ENCODE measurements at regions of chr22 and their contacts with region 1.

Region 1: GRCh38 chr22:17237038-17237668 is 17.9 kb upstream of the ADA2 start:
- DNase-seq: no peak
- ATAC-seq: no peak
- H3K4me3 Mint-ChIP-seq: no peak overlapping the region
- H3K27ac Mint-ChIP-seq: peak overlapping the region; percentile 91
- H3K4me1 Mint-ChIP-seq: peaks cover 62% of the 10 kb centered on the region
- H3K27me3 Mint-ChIP-seq: no peaks in the 10 kb centered on the region
- CTCF ChIP-seq: no peak

Region 2: DNA sequence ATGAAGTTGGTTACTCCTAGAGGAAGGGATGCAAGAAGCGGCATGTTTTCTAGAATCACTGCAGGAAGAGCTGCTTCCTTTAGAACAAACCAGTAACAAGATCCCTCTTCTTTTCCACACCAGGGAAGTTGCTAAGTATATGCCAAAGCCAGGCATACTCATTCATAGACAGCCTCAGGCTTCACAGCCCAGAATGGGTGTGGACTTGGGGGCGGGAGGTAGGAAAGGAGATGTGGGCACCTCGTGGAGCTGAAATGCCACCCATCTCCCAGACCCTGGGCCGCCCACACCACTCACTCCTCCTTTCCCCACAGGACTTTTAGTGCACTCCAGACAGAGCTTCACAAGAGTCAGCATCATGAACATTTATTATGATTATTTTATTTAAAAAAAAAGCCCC is 100.0 kb before region 1 on chr22:
- CTCF ChIA-PET with region 1: no interaction called
- POLR2A ChIA-PET with region 1: no interaction called
- DNase-seq: no peak
- ATAC-seq: no peak
- H3K4me3 Mint-ChIP-seq: no peak overlapping the region
- H3K27ac Mint-ChIP-seq: no peak overlapping the region
- H3K4me1 Mint-ChIP-seq: 0 out of 2 replicates have a peak, but pooled peaks cover 2% of the 10 kb centered on the region
- H3K27me3 Mint-ChIP-seq: no peaks in the 10 kb centered on the region
- CTCF ChIP-seq: no peak

Region 3: GRCh38 chr22:17205432-17205831 is 31.7 kb before region 1 on chr22:
- CTCF ChIA-PET with region 1: interaction called, 13 read pairs
- POLR2A ChIA-PET with region 1: no interaction called
- DNase-seq: no peak
- ATAC-seq: no peak
- H3K4me3 Mint-ChIP-seq: no peak overlapping the region
- H3K27ac Mint-ChIP-seq: 0 out of 2 replicates have a peak overlapping the region, but pooled peaks have one; percentile 70
- H3K4me1 Mint-ChIP-seq: peaks cover 35% of the 10 kb centered on the region
- H3K27me3 Mint-ChIP-seq: peaks cover 7% of the 10 kb centered on the region; the same call in 1 of the 2 replicates
- CTCF ChIP-seq: no peak

Region 4: DNA sequence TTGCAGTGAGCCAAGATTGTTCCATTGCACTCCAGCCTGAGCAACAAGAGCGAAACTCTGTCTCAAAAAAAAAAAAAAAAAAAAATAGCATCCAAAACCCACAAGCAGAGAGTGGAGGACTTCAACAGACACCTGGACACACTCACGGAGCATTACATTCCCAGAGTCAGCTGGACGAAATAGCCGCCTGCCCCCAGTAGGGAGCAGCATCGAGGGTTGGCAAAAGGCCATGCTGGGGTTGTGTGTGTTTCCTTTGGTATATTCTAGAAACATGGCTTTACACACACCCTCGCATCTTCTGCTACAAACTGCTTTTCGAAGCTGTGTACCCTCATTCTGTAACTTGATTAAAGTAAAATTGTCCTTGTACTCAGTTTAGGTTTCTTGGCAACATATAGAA is 23.2 kb before region 1 on chr22:
- CTCF ChIA-PET with region 1: interaction called, 37 read pairs
- POLR2A ChIA-PET with region 1: interaction called, 3 read pairs
- DNase-seq: peak; percentile 72
- ATAC-seq: peak; percentile 70
- H3K4me3 Mint-ChIP-seq: no peak overlapping the region
- H3K27ac Mint-ChIP-seq: no peak overlapping the region
- H3K4me1 Mint-ChIP-seq: peaks cover 41% of the 10 kb centered on the region
- H3K27me3 Mint-ChIP-seq: no peaks in the 10 kb centered on the region; the same call in 1 of the 2 replicates
- CTCF ChIP-seq: peak; percentile 31; the same call in 1 of the 2 replicates

Region 5: DNA sequence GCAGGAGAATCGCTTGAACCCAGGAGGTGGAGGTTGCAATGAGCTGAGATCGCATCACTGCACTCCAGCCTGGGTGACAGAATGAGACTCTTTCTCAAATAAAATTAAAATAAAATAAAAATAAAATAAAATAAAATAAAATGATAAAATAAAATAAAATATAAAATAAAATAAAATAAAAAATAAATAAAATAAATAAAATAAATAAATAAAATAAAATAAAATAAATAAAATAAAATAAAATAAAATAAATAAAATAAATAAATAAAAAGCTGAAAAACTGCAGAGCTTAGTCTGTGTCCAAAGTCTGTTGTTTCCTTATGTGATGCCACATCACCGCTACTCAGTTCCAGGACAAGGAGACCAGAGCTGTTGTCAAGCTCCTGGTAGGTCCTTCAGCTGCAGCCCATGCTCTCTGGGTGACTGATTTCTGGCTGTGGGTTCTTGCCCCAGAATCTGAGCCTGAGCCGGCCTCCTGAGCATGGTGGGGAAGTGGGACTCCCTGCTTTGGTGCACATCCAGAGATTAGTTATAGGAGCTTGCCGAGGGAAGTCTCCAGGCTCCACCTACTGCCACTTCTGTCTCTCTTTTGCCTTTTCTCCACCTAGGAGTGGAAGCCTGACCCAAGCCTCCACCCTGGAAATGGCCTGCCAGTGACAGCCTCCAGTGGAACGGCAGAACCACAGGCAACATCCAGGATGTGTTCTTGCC is 13.4 kb after region 1 on chr22:
- CTCF ChIA-PET with region 1: interaction called, 10 read pairs
- POLR2A ChIA-PET with region 1: interaction called, 3 read pairs
- DNase-seq: no peak
- ATAC-seq: peak; percentile 38; the same call in 1 of the 2 replicates
- H3K4me3 Mint-ChIP-seq: no peak overlapping the region
- H3K27ac Mint-ChIP-seq: peak overlapping the region; percentile 91
- H3K4me1 Mint-ChIP-seq: peaks cover 6% of the 10 kb centered on the region
- H3K27me3 Mint-ChIP-seq: no peaks in the 10 kb centered on the region
- CTCF ChIP-seq: no peak

Region 6: GRCh38 chr22:17258015-17258787 is 21.0 kb after region 1 on chr22:
- CTCF ChIA-PET with region 1: interaction called, 20 read pairs
- POLR2A ChIA-PET with region 1: interaction called, 11 read pairs
- DNase-seq: peak; percentile 76
- ATAC-seq: peak; percentile 67
- H3K4me3 Mint-ChIP-seq: peak overlapping the region; percentile 55
- H3K27ac Mint-ChIP-seq: peak overlapping the region; percentile 100
- H3K4me1 Mint-ChIP-seq: peaks cover 74% of the 10 kb centered on the region
- H3K27me3 Mint-ChIP-seq: no peaks in the 10 kb centered on the region
- CTCF ChIP-seq: no peak

Region 7: GRCh38 chr22:17266251-17266971 is 29.3 kb after region 1 on chr22:
- CTCF ChIA-PET with region 1: interaction called, 54 read pairs
- POLR2A ChIA-PET with region 1: interaction called, 14 read pairs
- DNase-seq: peak; percentile 81
- ATAC-seq: peak; percentile 66
- H3K4me3 Mint-ChIP-seq: peak overlapping the region; percentile 69
- H3K27ac Mint-ChIP-seq: peak overlapping the region; percentile 96
- H3K4me1 Mint-ChIP-seq: peaks cover 90% of the 10 kb centered on the region
- H3K27me3 Mint-ChIP-seq: no peaks in the 10 kb centered on the region
- CTCF ChIP-seq: no peak

Region 8: DNA sequence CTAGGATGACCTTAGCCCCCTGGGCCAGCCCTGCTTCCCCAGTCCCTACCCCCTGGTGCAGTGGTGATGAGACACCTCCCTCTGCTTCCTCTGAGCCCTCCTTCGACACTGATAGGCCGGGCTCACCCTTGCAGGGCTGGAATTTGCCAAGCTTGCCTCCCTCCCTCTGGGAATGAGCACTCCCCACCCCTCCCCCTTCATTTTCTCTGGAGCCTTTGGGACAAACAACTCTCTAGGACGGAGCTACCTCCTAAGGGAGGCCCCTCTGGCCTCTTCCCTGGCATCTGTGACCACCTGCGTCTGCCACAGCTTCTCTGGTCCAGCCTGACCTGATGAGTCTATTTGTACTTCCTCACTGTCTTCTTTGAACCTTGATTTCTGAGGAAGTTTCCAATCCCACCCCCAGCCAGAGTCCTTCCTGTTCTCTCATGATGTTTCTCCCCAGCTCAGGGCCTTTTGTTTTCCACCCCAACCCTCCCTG is 35.4 kb after region 1 on chr22:
- CTCF ChIA-PET with region 1: interaction called, 54 read pairs
- POLR2A ChIA-PET with region 1: interaction called, 3 read pairs
- DNase-seq: peak; percentile 65
- ATAC-seq: peak; percentile 83
- H3K4me3 Mint-ChIP-seq: peak overlapping the region; percentile 27; the same call in 1 of the 2 replicates
- H3K27ac Mint-ChIP-seq: peak overlapping the region; percentile 98
- H3K4me1 Mint-ChIP-seq: peaks cover 54% of the 10 kb centered on the region
- H3K27me3 Mint-ChIP-seq: no peaks in the 10 kb centered on the region
- CTCF ChIP-seq: no peak

Measured in WTC11 (cell line).